Cardiac septum (tissue), 1 donor: ENCODE measurements at regions of chr2 and their contacts with region 1.

Region 1: GRCh38 chr2:176140513-176141317 is 10.6 kb upstream of the HOXD4 start:
- DNase-seq: peak; percentile 79

Region 2: DNA sequence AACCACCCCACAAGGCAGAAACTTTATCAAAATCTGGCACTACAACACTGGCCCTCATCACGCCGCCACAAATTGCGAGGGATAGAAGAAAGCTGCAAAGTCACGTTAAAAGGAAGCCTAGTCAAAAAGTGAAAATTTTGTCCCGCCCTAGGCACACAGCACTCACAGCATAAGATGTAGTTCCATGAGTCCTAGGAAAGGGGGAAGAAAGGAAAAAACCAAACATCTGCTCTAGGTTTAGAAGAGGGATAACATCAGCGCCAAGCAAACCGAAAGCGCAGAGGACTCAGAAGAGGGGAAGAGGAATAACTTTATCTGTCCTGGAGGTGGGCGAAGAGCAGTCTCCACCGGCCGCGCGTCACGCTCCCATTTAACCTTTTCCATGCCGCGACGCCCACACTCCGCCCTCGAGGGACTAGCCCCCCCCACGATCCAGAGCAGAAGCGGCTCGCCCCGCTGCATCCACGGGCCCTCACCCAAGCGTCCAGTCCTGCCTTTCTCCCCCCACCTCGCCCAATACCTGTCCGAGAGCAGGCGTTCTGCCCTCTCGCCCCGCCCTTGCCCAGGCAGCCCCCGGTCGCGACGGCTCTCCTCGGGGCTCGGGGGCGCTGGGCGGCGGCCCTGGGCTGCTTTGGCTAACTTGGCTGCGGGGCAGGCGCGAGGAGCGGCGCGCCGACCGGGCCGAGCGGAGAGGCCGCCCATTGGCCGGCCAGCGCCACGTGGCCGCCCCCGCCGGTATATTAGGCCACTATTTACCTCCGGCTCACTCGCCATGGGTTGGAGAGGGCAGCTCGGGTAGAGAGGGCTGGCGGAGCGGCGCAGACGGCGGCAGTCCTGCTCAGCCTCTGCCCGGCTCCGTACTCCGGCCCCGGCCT is 47.4 kb after region 1 on chr2 and contains the start of gene HOXD1:
- intact Hi-C with region 1: loop called (anchors 5 kb)
- DNase-seq: no peak
- total RNA-seq, gene HOXD1: 0.59 TPM

Region 3: DNA sequence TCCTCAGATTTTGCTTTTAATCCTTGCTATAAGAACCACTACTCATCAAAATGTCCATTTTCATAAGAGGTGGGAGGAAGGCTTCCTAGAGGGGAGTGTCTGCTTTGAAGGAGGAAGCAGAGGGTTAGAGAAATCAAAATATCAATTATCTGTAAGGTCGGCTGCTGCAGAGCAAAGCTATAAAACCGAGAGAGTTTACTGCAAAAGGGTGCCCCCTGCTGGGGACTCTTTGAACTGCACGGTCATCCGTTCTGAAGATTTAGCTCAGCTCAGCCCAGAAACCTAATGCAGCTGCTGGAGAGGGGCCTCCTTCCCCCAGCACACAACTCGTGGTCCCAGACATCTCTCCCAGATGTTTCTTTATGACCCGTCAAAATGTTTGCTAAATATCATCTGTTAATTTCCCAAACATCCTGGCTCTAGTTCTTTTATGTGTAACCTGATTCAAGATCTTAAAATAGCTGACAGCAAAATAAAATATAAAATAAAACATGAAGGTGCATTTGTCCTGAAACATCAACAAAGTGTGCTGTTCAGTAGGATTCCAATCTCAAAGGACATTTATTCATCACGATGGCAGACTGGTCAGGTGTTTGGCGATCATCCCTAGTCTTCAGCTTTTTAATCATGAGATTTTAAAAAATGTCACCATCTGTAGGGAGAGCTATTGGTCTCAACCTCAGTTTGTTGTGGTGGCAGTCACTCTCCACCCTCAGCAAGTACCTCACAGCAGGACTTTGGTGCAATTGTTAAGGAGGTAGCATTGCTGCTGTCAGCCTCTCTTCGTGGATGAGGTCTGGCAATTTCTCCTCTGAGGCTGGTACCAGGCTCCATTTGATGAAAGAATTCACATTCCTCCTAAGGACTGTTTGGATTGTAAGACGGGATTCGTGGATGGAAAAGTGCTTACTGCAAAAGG is 314.4 kb after region 1 on chr2:
- intact Hi-C with region 1: loop called (anchors 1 kb)
- DNase-seq: peak; percentile 82

Region 4: DNA sequence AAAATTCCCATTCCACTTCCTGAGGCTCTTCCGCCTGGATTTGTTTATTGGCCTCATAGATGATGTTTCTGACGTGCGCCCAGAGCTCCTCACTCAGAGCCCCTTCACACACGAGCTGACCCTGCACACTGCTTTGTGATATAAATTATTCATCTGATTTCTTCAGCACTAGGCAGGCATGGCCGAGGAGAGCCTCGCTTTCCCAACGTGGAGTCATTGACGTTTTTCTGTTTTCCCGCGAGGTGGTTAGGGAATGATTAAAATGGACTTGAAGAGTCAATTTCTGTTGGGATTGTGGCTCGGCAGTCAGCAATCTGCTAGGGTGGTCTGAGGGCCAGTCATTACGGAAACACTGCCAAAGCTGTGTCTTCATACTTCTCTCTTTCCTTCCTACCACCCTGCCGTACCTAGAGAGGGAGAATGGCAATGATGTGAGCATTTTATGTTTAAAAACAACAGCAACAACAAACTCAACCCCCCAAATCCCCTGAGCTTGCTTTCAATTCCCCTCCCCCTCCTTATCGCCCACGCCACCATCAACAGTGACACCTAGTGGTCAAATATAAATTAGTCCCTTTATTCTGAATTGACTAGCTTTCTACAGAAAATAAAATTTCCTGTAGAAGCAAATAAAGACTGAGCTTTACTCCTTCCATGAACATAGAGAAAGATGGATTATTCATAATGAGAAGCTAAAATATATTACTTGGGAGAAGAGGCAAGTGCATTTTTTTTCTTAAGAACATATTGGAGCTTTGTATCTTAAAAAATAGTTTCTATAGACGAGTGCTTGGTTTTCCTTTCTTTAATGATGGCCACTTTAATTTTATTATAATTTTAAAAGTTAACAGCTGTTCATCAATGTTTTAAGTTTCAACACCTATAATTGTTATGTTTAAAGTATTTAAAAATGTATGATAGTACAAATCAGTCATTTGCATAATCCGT is 413.7 kb after region 1 on chr2:
- intact Hi-C with region 1: loop called (anchors 1 kb)
- DNase-seq: no peak